Head of caudate nucleus (tissue), 42 donors: ENCODE measurements at regions of chr9 and their contacts with region 1.

Region 1: GRCh38 chr9:89602978-89603766 is 1.6 kb upstream of the GADD45G start:
- DNase-seq: peak; percentile 88 to 97 (median 94)

Region 2: DNA sequence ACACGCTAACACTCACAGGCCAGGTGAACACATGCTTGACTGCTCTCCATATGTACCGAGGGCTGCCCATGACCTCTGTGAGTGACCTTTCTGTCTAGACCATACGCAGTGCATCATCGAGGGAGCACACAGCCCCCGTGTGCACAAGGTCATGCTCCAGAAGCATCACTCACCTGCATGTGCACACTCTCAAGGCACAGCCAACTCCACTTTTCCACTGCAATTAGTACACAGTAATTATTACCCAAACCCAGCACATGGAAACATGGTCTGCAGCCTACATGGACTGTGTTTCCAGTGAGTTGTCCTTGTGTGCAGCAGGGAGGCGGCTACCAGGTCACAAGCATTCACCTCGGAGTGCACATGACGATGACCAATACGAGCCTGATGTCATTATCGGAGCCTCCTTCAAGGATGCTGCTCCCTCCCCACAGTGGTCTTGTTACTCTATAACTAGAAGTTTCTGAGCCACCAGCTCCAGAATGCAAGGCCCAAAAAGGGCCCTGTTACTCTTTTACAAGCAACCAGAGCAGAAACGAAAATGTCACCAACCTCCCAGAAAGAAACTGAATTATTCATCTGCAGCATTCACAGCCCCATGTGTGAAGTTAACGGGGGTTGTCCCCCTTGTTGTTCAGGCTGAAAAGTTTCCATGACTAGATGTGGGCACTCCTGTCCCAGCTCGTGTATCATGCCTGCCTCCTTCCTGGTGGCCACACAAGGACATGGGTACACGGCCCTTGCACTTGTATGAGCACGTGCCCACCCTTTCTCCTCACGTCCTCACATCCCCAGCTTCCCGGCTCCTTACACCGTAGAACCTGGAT is 136.5 kb before region 1 on chr9:
- intact Hi-C with region 1: no loop called
- DNase-seq: peak in 4 of 42 donors; percentile 8 to 20 (median 12)

Region 3: GRCh38 chr9:89505911-89506310 is 97.3 kb before region 1 on chr9:
- intact Hi-C with region 1: no loop called
- DNase-seq: peak in 2 of 42 donors; percentile 30 to 39

Region 4: DNA sequence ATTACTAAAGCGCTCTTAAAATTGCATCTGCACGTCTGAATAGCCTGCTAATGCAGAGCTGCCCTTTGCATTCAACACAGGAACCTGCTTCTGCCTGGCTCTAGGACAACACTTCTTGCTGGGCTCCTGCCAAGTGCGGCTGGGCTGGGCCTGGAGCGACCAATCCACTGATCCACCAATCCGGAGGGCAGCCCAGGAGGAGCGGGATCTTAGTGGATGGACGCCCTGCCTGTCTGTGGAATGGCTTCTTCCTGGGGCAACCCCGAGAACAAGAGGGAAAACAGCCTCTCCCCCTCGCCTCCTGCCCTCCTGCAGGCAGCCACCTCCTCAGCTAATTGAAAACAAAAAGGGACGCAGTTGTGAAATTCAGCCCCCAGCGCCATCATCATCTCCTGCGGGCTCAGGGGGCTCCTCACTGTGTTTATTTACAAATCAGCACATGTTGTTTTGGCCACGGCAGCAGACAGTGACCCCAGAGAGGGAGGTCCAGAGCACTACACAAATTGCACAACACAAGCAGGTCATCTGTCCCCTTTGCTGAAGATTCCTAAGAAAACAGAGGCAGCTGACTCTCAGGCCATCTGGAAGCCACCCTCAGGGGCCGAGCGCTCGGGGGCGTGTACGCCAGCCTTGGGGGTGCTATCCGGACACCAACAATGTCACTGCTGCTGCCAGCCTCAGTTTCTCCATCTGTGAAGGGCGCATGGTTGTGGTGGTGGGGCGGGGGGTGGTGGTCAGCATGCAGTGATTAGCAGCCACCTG is 59.0 kb after region 1 on chr9:
- intact Hi-C with region 1: loop called (anchors 5 kb)
- DNase-seq: peak; percentile 93 to 99 (median 98)

Region 5: GRCh38 chr9:89808076-89808755 is 205.0 kb after region 1 on chr9:
- intact Hi-C with region 1: loop called (anchors 10 kb)
- DNase-seq: peak in 4 of 42 donors; percentile 4 to 40 (median 28)

Region 6: GRCh38 chr9:89984214-89984613 is 381.0 kb after region 1 on chr9:
- intact Hi-C with region 1: loop called (anchors 10 kb)
- DNase-seq: no peak

Region 7: DNA sequence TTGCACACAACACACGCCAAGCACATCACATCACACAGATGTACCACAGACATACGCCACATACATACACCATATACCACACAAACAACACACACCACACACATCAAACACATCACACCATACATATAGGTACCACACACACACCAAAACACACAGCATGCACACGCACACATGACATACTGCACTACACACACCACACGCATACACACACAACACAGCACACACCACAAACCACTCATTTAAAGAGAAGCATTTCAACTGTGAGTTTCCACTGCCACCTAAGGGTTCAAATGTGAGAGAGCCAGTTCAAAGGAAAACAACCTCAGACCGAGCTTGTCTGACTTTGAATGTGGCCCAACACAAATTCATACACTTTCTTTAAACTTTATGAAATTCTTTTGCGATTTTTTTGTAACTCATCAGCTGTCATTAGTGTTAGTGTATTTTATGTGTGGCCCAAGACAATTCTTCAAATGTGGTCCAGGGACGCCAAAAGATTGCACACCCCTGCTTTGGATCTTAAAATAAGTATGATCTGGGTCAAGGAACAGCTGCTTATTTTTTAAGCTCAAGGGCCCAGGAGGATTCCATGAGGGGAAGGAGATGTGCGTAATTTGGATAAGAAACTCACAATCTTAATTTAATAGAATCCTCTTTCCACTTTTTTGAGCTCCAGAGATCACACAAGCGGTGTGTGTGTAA is 496.2 kb after region 1 on chr9:
- intact Hi-C with region 1: loop called (anchors 2 kb)
- DNase-seq: peak in 16 of 42 donors; percentile 18 to 68 (median 38)